BJ (cell line): ENCODE measurements at regions of chr11 and their contacts with region 1.

Region 1: GRCh38 chr11:61332797-61333549 is at the starts of genes DDB1 and TKFC:
- DNase-seq: peak; percentile 53
- H3K4me3 ChIP-seq: peak within 1 kb of the TSS; percentile 95
- H3K27me3 ChIP-seq: no peaks in the 10 kb centered on the region
- CTCF ChIP-seq: no peak
- polyA plus RNA-seq, gene DDB1: 265 and 281 TPM in 2 replicates
- polyA plus RNA-seq, gene TKFC: 23.9 and 37.6 TPM in 2 replicates

Region 2: GRCh38 chr11:61353131-61354067 is 20.4 kb after region 1 on chr11:
- CTCF ChIA-PET with region 1: interaction called, 56 read pairs
- POLR2A ChIA-PET with region 1: no interaction called
- DNase-seq: no peak
- H3K4me3 ChIP-seq: no peak overlapping the region
- H3K27me3 ChIP-seq: no peaks in the 10 kb centered on the region
- CTCF ChIP-seq: no peak

Region 3: GRCh38 chr11:61369372-61370219 is 36.6 kb after region 1 on chr11:
- CTCF ChIA-PET with region 1: interaction called, 60 read pairs
- POLR2A ChIA-PET with region 1: no interaction called
- DNase-seq: no peak
- H3K4me3 ChIP-seq: no peak overlapping the region
- H3K27me3 ChIP-seq: no peaks in the 10 kb centered on the region
- CTCF ChIP-seq: no peak

Region 4: GRCh38 chr11:61392981-61393595 is 60.1 kb after region 1 on chr11:
- CTCF ChIA-PET with region 1: interaction called, 374 read pairs
- POLR2A ChIA-PET with region 1: no interaction called
- DNase-seq: no peak
- H3K4me3 ChIP-seq: peak overlapping the region; percentile 61
- H3K27me3 ChIP-seq: no peaks in the 10 kb centered on the region
- CTCF ChIP-seq: peak; percentile 28

Region 5: GRCh38 chr11:61541598-61541997 is 208.6 kb after region 1 on chr11:
- CTCF ChIA-PET with region 1: no interaction called
- POLR2A ChIA-PET with region 1: no interaction called
- DNase-seq: no peak
- H3K4me3 ChIP-seq: no peak overlapping the region
- H3K27me3 ChIP-seq: peaks cover 5% of the 10 kb centered on the region
- CTCF ChIP-seq: no peak